Calu3 (cell line): ENCODE measurements at regions of chr5 and their contacts with region 1.

Region 1: DNA sequence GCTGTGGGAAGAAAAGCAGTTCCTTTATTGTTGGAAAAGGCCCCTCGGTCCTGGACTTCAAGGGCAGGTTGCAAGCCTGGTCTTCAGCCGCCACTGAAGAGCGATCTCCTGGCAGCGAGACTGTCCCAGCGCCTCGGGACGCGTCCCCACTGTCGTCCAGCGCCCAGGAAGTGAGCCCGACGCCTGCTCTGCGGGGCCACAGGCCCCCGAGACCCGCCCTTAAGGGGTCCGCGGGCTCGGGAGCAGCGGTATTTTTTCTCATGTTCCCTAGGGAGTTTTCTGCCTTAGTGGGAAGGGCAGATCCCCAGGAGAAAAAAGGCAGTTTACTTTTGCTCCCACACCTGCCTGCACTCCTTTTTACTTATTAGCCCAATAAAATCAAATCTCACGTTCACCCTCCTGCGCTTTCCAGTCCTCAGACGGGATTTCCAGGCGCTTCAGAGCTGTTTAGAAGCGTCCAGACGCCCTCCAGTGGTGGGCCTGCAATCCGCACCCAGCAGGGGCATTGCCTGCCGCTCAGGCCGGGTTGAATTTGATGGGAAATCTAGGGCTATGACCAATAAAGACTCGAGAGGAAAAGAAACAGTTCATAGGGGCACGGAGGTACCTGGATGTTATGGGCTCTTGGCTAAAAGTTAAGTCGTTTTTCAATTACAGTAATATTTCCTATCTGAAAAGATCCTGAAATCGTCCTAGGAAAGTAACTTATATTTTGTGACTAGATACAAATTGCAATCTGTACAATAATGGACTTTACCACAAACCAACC is 2.8 kb upstream of the EFNA5 start:
- DNase-seq: peak; percentile 97
- H3K4me3 Mint-ChIP-seq: peak overlapping the region; percentile 94
- H3K27ac Mint-ChIP-seq: peak overlapping the region; percentile 89
- H3K4me1 Mint-ChIP-seq: peaks cover 18% of the 10 kb centered on the region
- H3K27me3 Mint-ChIP-seq: no peaks in the 10 kb centered on the region
- CTCF ChIP-seq: peak; percentile 95

Region 2: DNA sequence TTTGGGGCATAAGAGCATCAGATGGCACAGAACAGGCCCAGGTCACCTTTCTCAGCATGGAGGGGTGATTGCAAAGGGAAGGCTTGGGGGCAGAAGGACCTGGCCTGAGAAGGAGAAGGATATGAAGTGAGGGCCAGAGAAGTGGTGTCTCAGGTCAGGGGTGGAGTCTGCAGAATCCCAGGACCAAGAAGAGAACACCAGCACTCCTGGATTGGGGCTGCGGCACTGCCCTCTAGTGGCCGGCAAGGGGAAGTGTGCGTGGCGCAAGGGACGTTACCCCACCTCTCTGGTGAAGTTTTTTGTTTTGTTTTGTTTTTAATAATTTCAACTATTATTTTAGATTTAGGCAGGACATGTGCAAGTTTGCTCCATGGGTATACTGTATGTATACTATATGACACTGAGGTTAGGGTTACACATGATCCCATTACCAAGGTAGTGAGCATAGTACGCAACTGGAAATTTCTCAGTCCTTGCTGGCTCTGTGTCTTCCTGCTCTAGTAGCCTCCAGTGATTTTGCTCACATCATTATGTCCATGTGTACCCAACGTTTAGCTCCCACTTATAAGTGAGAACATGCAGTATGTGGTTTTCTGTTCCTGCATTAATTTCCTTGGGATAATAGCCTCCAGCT is 1551.5 kb before region 1 on chr5:
- CTCF ChIA-PET with region 1: no interaction called
- intact Hi-C with region 1: loop called (anchors 10 kb)
- DNase-seq: peak; percentile 41
- H3K4me3 Mint-ChIP-seq: no peak overlapping the region
- H3K27ac Mint-ChIP-seq: no peak overlapping the region
- H3K4me1 Mint-ChIP-seq: peaks cover 4% of the 10 kb centered on the region
- H3K27me3 Mint-ChIP-seq: no peaks in the 10 kb centered on the region
- CTCF ChIP-seq: peak; percentile 91

Region 3: DNA sequence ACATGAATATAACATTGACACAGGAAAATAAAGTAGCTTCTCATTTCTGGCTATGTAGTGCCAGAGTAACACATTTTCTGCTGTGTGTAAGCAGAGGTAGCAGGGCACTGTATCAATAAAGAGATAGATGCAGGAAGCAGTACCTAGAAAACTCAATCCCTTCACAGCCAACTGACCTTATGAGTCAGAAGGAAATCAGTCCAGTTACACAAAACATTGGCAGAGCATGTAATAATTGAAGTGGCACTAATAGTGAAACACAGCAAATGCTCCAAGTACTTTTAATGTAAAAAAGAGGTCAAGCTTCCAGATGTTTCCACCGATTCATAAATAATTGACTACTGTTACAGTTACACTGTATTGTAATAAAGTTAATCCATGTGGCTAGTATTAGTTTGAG is 709.4 kb before region 1 on chr5:
- CTCF ChIA-PET with region 1: no interaction called
- intact Hi-C with region 1: loop called (anchors 10 kb)
- DNase-seq: peak; percentile 27
- H3K4me3 Mint-ChIP-seq: no peak overlapping the region
- H3K27ac Mint-ChIP-seq: no peak overlapping the region
- H3K4me1 Mint-ChIP-seq: peaks cover 31% of the 10 kb centered on the region
- H3K27me3 Mint-ChIP-seq: no peaks in the 10 kb centered on the region
- CTCF ChIP-seq: no peak

Region 4: DNA sequence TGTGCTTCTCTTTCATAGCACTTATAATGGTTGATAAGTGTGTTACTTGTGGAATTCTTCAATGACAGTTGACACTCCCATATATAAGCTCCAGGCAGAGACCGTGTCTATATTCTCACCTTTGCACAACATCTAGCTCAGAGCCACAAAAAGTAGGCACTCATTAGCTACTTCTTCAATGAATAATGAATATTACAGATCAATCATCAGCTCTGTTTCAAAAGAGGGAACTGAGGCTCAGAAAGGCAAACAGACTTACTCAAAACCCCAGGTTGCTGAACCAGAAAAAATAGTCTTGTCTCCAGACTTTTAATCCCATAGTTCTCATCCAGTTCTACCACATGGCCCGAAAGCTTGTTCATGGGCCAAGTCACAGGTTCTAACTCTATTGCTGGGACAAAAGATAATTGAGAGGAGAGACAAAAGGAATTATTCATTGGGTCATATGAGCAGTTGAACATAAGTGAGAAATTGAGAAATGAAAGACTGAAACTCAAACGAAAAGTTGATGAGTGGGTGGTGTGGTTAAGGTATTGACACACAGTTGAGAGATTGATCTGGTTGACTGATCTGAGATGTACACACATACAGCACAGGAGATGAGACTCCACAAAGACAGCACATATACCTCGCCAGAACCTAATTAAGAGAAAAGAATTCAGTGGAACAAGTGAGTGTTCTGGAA is 384.4 kb before region 1 on chr5:
- CTCF ChIA-PET with region 1: no interaction called
- intact Hi-C with region 1: loop called (anchors 5 kb)
- DNase-seq: no peak
- H3K4me3 Mint-ChIP-seq: no peak overlapping the region
- H3K27ac Mint-ChIP-seq: peak overlapping the region; percentile 82
- H3K4me1 Mint-ChIP-seq: peaks cover 77% of the 10 kb centered on the region
- H3K27me3 Mint-ChIP-seq: no peaks in the 10 kb centered on the region
- CTCF ChIP-seq: no peak

Region 5: DNA sequence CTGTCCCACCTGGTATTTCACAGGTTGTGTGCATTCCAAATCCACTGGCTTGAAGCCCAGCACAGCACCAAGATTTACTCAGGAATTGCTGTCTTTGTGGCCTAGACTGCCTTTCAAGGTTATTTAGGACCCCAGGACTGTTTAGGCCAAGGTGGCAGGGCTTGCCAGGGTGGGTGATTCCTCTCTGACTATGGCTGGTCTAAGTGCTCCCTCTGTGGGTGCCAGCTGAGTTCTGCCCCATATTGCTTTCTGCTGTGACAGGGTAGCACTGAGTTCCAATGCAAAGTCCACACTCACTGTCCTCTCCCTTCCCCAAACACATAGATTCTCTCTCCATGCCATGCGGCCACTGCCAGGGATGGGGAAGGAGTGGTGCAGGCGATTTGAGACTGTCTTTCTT is 321.0 kb before region 1 on chr5:
- CTCF ChIA-PET with region 1: no interaction called
- intact Hi-C with region 1: no loop called
- DNase-seq: no peak
- H3K4me3 Mint-ChIP-seq: no peak overlapping the region
- H3K27ac Mint-ChIP-seq: no peak overlapping the region
- H3K4me1 Mint-ChIP-seq: peaks cover 12% of the 10 kb centered on the region
- H3K27me3 Mint-ChIP-seq: no peaks in the 10 kb centered on the region
- CTCF ChIP-seq: peak; percentile 14

Region 6: DNA sequence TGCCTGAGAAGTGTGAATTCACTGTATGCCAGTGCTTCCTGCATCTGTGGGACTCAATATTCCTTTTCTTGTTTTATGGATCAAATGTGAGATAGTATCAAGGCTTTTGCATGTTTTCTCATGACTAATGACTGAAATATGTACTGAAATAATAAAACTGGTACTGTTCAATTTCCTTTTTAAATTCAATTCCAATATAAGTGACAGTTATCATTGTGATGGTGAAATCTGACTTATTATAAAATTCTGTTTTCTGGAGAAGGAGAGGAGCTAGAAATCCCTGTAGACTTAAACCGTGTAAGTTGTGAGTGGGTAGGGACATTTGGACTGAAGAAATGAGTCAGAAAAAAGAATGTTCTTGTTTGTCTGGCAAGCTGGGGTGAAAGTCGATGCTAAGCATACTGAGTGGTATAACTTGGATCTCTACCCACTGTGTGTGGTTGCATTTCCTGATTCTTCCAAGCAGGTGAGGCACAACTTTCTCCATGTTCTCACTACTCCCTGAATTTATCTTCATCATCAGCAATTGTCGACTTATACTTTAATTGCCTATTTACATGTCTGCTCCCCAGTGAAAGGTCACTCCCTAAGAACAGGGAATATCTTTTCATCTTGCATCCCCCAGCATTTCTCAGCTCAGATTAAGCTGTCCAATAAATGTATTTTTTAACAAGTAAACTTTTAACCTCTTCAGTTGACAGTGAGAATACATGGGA is 247.9 kb before region 1 on chr5:
- CTCF ChIA-PET with region 1: interaction called, 3 read pairs
- intact Hi-C with region 1: loop called (anchors 1 kb)
- DNase-seq: peak; percentile 55
- H3K4me3 Mint-ChIP-seq: peak overlapping the region; percentile 1
- H3K27ac Mint-ChIP-seq: peak overlapping the region; percentile 67
- H3K4me1 Mint-ChIP-seq: peaks cover 74% of the 10 kb centered on the region
- H3K27me3 Mint-ChIP-seq: no peaks in the 10 kb centered on the region
- CTCF ChIP-seq: no peak

Region 7: DNA sequence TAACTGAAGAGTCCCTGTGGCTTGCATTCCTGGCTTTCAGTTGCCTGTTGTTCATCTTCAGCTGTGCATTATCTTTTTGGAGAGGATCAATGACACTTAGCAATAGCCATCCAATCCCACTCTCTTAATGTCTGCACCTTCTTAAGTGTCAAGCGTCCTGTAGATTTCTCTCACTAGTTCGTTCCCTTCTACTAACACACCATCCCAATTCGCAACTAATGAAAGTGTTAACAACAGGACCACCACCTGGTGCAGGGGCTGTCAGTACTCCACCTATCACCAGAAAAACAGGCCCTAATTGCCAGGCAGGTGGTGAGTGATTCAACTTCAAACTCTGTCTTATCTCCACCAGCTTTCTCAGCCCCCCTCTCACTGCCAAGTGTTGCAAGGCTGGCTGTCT is 166.6 kb after region 1 on chr5:
- CTCF ChIA-PET with region 1: no interaction called
- intact Hi-C with region 1: no loop called
- DNase-seq: no peak
- H3K4me3 Mint-ChIP-seq: no peak overlapping the region
- H3K27ac Mint-ChIP-seq: no peak overlapping the region
- H3K4me1 Mint-ChIP-seq: no peaks in the 10 kb centered on the region
- H3K27me3 Mint-ChIP-seq: peaks cover 84% of the 10 kb centered on the region
- CTCF ChIP-seq: no peak